ENCODE measurements at regions of chr1 and their contacts with region 1.

Region 1: DNA sequence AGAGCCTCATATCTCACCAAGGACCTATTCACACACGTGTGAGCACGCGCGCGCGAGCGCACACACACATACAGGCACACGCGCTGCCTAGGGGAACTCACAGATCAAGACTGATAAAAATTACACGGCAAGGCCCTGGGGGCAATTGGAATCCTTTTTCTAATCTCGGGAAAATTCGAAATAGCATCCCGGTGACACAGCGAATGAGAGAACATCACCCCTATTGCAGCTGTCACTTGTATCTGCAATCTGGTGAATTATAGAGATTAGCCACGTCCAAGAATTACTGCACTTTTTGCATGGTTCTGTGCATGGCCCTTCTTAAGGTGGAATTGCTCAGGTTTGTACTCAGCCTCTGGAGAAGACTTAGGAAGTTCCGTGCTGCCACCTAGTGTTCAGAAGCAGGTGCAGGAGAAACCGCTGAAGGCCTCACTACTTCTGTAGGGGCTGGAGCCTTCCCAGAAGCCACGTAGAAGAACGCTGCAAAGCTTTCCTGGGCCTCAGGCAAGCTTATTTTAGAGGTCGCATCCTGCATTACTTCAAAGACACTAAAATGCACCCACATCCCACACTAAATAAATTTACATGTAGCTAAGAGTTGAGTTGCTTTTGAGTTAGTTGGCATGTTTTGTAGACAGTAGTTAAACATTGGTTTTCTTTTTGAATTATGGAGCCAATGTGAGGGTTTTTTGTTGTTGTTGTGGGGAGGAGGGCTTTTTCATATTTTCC is 229.2 kb upstream of the CAMK1G start:
- DNase-seq: peak; percentile 84
- H3K4me3 ChIP-seq: no peak overlapping the region
- H3K27ac ChIP-seq: peak overlapping the region; percentile 80
- H3K4me1 ChIP-seq: peaks cover 35% of the 10 kb centered on the region
- H3K27me3 ChIP-seq: no peaks in the 10 kb centered on the region
- CTCF ChIP-seq: peak; percentile 90 to 94

Region 2: GRCh38 chr1:209076688-209077087 is 277.6 kb before region 1 on chr1:
- CTCF ChIA-PET with region 1: no interaction called
- dilution Hi-C with region 1: no loop called
- in situ Hi-C with region 1: no loop called
- intact Hi-C with region 1: loop called (anchors 10 kb)
- DNase-seq: peak; percentile 21
- H3K4me3 ChIP-seq: no peak overlapping the region
- H3K27ac ChIP-seq: no peak overlapping the region
- H3K4me1 ChIP-seq: peaks cover 26% of the 10 kb centered on the region
- H3K27me3 ChIP-seq: no peaks in the 10 kb centered on the region
- CTCF ChIP-seq: peak; percentile 42 to 43

Region 3: GRCh38 chr1:209368864-209369598 is 14.8 kb after region 1 on chr1:
- CTCF ChIA-PET with region 1: interaction called, 4 read pairs
- dilution Hi-C with region 1: no loop called
- in situ Hi-C with region 1: no loop called
- intact Hi-C with region 1: loop called (anchors 1 kb)
- DNase-seq: peak; percentile 90
- H3K4me3 ChIP-seq: no peak overlapping the region
- H3K27ac ChIP-seq: peak overlapping the region; percentile 75
- H3K4me1 ChIP-seq: peaks cover 86% of the 10 kb centered on the region
- H3K27me3 ChIP-seq: no peaks in the 10 kb centered on the region
- CTCF ChIP-seq: no peak

Region 4: GRCh38 chr1:209405183-209405814 is 51.0 kb after region 1 on chr1:
- CTCF ChIA-PET with region 1: no interaction called
- dilution Hi-C with region 1: no loop called
- in situ Hi-C with region 1: no loop called
- intact Hi-C with region 1: loop called (anchors 2 kb)
- DNase-seq: peak; percentile 83
- H3K4me3 ChIP-seq: peak overlapping the region in 2 of 3 experiments; percentile 16 to 18
- H3K27ac ChIP-seq: peak overlapping the region; percentile 98
- H3K4me1 ChIP-seq: peaks cover 70% of the 10 kb centered on the region
- H3K27me3 ChIP-seq: no peaks in the 10 kb centered on the region
- CTCF ChIP-seq: no peak

Region 5: DNA sequence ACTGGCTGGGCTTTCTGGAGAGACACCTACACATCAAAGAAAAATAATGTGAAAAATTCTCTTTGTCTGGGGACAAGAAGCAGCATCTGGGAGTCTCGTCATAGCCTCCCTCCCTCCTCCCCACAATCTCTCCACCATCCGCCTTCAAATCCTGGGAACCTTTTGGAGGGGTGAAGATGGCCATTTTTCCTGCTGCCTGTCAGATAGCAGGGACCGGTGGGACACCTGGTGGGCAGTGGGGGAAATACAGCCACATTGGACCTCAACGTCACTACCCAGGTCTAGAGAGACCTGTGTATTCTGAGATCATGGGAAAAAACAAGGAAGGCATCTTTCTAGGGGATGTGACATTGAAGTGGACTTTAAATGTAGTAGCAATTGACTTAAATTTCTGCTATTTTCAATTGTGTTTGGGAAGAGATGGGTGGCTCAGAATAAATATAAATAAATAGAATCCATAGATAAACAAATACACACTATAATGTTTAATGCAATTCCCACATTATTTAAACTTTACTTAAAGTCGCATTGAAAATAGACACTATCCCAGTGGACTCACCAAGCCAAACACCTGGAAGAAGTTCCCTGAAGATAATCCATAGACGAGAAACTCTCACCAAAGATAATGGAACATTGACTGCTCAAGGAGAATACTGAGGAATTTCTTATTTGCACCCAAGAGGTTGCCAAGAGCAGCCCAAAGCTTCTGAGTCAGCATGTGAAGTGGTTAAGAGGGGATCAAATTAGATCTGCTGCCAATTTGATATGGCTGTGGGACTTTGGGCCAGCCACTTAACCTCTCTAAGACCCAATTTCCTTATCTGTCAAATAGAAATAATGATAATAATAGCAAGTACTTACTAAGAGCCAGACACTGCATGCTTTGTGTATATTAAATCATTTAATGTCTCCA is 81.6 kb after region 1 on chr1:
- CTCF ChIA-PET with region 1: interaction called, 5 read pairs
- dilution Hi-C with region 1: loop called (anchors 5 kb)
- in situ Hi-C with region 1: no loop called
- intact Hi-C with region 1: loop called (anchors 1 kb)
- DNase-seq: peak; percentile 80
- H3K4me3 ChIP-seq: no peak overlapping the region
- H3K27ac ChIP-seq: peak overlapping the region; percentile 99
- H3K4me1 ChIP-seq: peaks cover 51% of the 10 kb centered on the region
- H3K27me3 ChIP-seq: no peaks in the 10 kb centered on the region
- CTCF ChIP-seq: peak; percentile 92 to 97

Region 6: DNA sequence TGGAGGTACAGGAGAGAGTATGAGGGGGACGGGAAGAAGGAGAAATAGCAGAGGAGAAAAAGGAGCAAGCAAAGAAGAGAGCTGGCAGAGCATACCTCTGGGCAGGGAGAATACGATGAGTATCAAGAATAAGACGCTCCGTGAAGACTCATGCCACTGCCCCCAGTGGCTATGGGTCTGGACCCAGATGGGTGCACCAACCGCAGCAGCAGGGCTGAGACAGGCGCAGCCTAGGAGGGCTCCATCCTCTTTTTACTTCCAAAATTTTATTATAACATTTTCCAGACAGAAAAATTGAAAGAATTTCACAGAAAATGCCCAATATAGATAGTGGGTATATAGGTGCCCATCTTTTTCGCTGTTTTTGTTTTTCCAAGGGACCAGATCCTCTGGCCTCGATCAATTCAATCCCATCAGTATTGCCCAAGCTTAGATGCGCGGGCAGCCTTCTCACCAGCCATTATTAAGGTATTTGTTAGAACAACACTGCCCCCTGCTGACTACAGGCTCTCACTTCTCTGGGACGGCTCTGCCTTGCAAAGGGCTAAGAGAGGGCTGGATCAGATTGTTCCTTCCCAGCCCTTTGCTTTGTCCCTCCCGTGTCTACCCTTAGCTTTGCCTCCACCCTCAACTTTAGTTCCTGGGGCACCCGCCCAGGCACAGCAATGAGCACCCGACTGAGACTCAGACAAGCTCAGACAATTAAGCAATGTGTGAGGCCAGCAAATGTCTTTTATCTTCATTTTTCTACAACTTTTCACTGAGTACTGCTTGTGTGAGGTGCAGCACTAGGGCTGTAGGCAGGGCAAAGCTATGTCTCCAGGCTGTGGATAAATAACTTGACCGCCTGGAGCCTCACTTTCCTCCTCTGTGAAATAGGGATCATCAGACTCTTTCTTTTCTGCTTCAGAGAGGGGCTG is 211.7 kb after region 1 on chr1:
- CTCF ChIA-PET with region 1: no interaction called
- dilution Hi-C with region 1: no loop called
- in situ Hi-C with region 1: no loop called
- intact Hi-C with region 1: loop called (anchors 2 kb)
- DNase-seq: peak; percentile 77
- H3K4me3 ChIP-seq: no peak overlapping the region
- H3K27ac ChIP-seq: peak overlapping the region; percentile 18
- H3K4me1 ChIP-seq: peaks cover 38% of the 10 kb centered on the region
- H3K27me3 ChIP-seq: no peaks in the 10 kb centered on the region
- CTCF ChIP-seq: peak; percentile 78 to 87

Region 7: DNA sequence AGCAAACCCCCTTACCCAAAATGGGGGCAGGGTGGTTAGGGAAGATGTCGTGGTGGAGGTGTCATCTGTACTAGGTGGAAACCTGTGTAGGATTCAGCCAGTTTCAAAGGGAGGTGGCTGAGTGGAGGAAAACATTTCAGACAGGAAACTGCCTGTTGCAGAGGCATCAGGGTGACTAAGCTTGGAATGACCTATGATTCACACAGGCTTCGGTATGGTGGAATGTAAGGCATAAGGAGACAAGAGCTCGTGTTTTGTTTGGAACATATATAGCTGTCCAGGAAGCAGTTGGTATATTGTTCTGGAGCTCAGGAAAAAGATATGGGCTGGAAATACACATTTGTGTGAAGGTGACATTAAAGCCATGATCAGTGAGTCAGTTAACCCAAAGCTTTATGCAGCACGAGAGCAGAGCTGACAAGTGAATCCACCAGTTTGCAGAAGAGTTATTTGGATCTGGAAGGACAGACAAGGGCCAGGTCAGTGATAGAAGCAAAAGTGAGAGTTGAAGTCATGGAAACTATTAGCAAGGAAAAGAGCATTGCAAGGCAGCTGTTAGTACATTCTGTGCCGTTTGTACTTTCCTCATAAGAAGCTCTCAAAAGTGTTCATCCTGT is 485.7 kb after region 1 on chr1:
- CTCF ChIA-PET with region 1: no interaction called
- dilution Hi-C with region 1: no loop called
- in situ Hi-C with region 1: no loop called
- intact Hi-C with region 1: no loop called
- DNase-seq: peak; percentile 95
- H3K4me3 ChIP-seq: no peak overlapping the region
- H3K27ac ChIP-seq: peak overlapping the region; percentile 85
- H3K4me1 ChIP-seq: peaks cover 29% of the 10 kb centered on the region
- H3K27me3 ChIP-seq: no peaks in the 10 kb centered on the region
- CTCF ChIP-seq: no peak